CD4-positive, alpha-beta T cell (primary cell): ENCODE measurements at regions of chr2 and their contacts with region 1.

Region 1: GRCh38 chr2:19863303-19864041 is 38.3 kb downstream of the TTC32 start:
- DNase-seq: peak; percentile 33 to 82 (median 64)
- ATAC-seq: peak; percentile 74
- H3K4me3 ChIP-seq: no peak overlapping the region
- H3K4me3 Mint-ChIP-seq: no peak overlapping the region
- H3K27ac ChIP-seq: no peak overlapping the region
- H3K27ac Mint-ChIP-seq: no peak overlapping the region
- H3K4me1 ChIP-seq: peaks cover 13% of the 10 kb centered on the region
- H3K4me1 Mint-ChIP-seq: peaks cover 18% of the 10 kb centered on the region
- H3K27me3 ChIP-seq: no peaks in the 10 kb centered on the region
- H3K27me3 Mint-ChIP-seq: no peaks in the 10 kb centered on the region
- CTCF ChIP-seq: peak; percentile 99

Region 2: GRCh38 chr2:18387441-18388206 is 1475.8 kb before region 1 on chr2:
- CTCF ChIA-PET with region 1: no interaction called
- POLR2A ChIA-PET with region 1: no interaction called
- intact Hi-C with region 1: loop called (anchors 1 to 2 kb)
- DNase-seq: peak; percentile 26 to 70 (median 42)
- ATAC-seq: peak; percentile 52
- H3K4me3 ChIP-seq: no peak overlapping the region
- H3K4me3 Mint-ChIP-seq: no peak overlapping the region
- H3K27ac ChIP-seq: no peak overlapping the region
- H3K27ac Mint-ChIP-seq: no peak overlapping the region
- H3K4me1 ChIP-seq: no peaks in the 10 kb centered on the region
- H3K4me1 Mint-ChIP-seq: no peaks in the 10 kb centered on the region
- H3K27me3 ChIP-seq: no peaks in the 10 kb centered on the region
- H3K27me3 Mint-ChIP-seq: peaks cover 5% of the 10 kb centered on the region
- CTCF ChIP-seq: peak; percentile 88

Region 3: GRCh38 chr2:18435421-18436037 is 1427.9 kb before region 1 on chr2:
- CTCF ChIA-PET with region 1: no interaction called
- POLR2A ChIA-PET with region 1: no interaction called
- intact Hi-C with region 1: loop called (anchors 1 kb)
- DNase-seq: peak in 4 of 14 experiments; percentile 5 to 45 (median 25)
- ATAC-seq: no peak
- H3K4me3 ChIP-seq: no peak overlapping the region
- H3K4me3 Mint-ChIP-seq: no peak overlapping the region
- H3K27ac ChIP-seq: no peak overlapping the region
- H3K27ac Mint-ChIP-seq: no peak overlapping the region
- H3K4me1 ChIP-seq: no peaks in the 10 kb centered on the region
- H3K4me1 Mint-ChIP-seq: no peaks in the 10 kb centered on the region
- H3K27me3 ChIP-seq: no peaks in the 10 kb centered on the region
- H3K27me3 Mint-ChIP-seq: peaks cover 30% of the 10 kb centered on the region
- CTCF ChIP-seq: peak; percentile 49

Region 4: GRCh38 chr2:18520451-18521425 is 1342.7 kb before region 1 on chr2:
- CTCF ChIA-PET with region 1: interaction called, 10 read pairs
- POLR2A ChIA-PET with region 1: no interaction called
- intact Hi-C with region 1: loop called (anchors 1 kb)
- DNase-seq: peak; percentile 57 to 81 (median 70)
- ATAC-seq: peak; percentile 68
- H3K4me3 ChIP-seq: no peak overlapping the region
- H3K4me3 Mint-ChIP-seq: no peak overlapping the region
- H3K27ac ChIP-seq: no peak overlapping the region
- H3K27ac Mint-ChIP-seq: no peak overlapping the region
- H3K4me1 ChIP-seq: no peaks in the 10 kb centered on the region
- H3K4me1 Mint-ChIP-seq: no peaks in the 10 kb centered on the region
- H3K27me3 ChIP-seq: peaks cover 0 to 5% of the 10 kb centered on the region in 2 experiments
- H3K27me3 Mint-ChIP-seq: peaks cover 40% of the 10 kb centered on the region
- CTCF ChIP-seq: peak; percentile 88

Region 5: GRCh38 chr2:18749912-18750526 is 1113.5 kb before region 1 on chr2:
- CTCF ChIA-PET with region 1: no interaction called
- POLR2A ChIA-PET with region 1: no interaction called
- intact Hi-C with region 1: loop called (anchors 2 to 5 kb)
- DNase-seq: peak in 9 of 14 experiments; percentile 2 to 50 (median 13)
- ATAC-seq: no peak
- H3K4me3 ChIP-seq: no peak overlapping the region
- H3K4me3 Mint-ChIP-seq: no peak overlapping the region
- H3K27ac ChIP-seq: no peak overlapping the region
- H3K27ac Mint-ChIP-seq: no peak overlapping the region
- H3K4me1 ChIP-seq: no peaks in the 10 kb centered on the region
- H3K4me1 Mint-ChIP-seq: no peaks in the 10 kb centered on the region
- H3K27me3 ChIP-seq: no peaks in the 10 kb centered on the region
- H3K27me3 Mint-ChIP-seq: no peaks in the 10 kb centered on the region
- CTCF ChIP-seq: peak; percentile 59

Region 6: GRCh38 chr2:19362755-19363473 is 500.6 kb before region 1 on chr2:
- CTCF ChIA-PET with region 1: no interaction called
- POLR2A ChIA-PET with region 1: no interaction called
- intact Hi-C with region 1: loop called in 1 of 2 experiments (anchors 10 kb)
- DNase-seq: peak in 8 of 14 experiments; percentile 25 to 68 (median 58)
- ATAC-seq: peak; percentile 47
- H3K4me3 ChIP-seq: peak overlapping the region; percentile 71
- H3K4me3 Mint-ChIP-seq: peak overlapping the region; percentile 91
- H3K27ac ChIP-seq: no peak overlapping the region
- H3K27ac Mint-ChIP-seq: peak overlapping the region; percentile 63
- H3K4me1 ChIP-seq: peaks cover 40% of the 10 kb centered on the region
- H3K4me1 Mint-ChIP-seq: peaks cover 46% of the 10 kb centered on the region
- H3K27me3 ChIP-seq: peaks cover 36% of the 10 kb centered on the region in 2 experiments
- H3K27me3 Mint-ChIP-seq: peaks cover 65% of the 10 kb centered on the region
- CTCF ChIP-seq: peak; percentile 46

Region 7: GRCh38 chr2:19801367-19802080 is 61.9 kb before region 1 on chr2:
- CTCF ChIA-PET with region 1: no interaction called
- POLR2A ChIA-PET with region 1: no interaction called
- intact Hi-C with region 1: no loop called
- DNase-seq: no peak
- ATAC-seq: no peak
- H3K4me3 ChIP-seq: no peak overlapping the region
- H3K4me3 Mint-ChIP-seq: no peak overlapping the region
- H3K27ac ChIP-seq: no peak overlapping the region
- H3K27ac Mint-ChIP-seq: no peak overlapping the region
- H3K4me1 ChIP-seq: no peaks in the 10 kb centered on the region
- H3K4me1 Mint-ChIP-seq: no peaks in the 10 kb centered on the region
- H3K27me3 ChIP-seq: no peaks in the 10 kb centered on the region
- H3K27me3 Mint-ChIP-seq: no peaks in the 10 kb centered on the region
- CTCF ChIP-seq: no peak